ENCODE measurements at regions of chr2 and their contacts with region 1.

Region 1: DNA sequence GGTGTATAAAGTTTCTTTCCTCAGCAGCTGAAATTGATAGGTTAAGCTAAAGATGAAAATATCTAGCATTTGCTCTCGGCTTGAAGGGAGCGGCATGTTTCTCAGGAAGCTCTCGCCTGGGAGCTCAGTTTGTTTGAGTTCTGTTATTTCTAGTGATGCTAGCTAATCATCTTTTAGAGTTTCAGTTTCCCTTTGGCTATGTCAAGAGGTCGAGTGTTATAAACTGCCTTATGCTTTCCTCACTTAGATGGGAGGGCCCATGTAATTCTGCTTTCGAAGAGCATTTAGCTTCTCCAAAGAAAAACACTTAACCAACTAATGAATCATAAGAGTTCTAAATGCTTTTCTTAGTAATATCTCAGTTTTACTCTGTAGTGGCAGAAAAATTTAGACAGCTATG is 33.6 kb downstream of the PLCL1 start:
- DNase-seq: peak in 5 of 14 experiments; percentile 8 to 74 (median 66)
- ATAC-seq: peak; percentile 87
- H3K4me3 ChIP-seq: peak overlapping the region; percentile 4
- H3K4me3 Mint-ChIP-seq: peak overlapping the region; percentile 87
- H3K27ac ChIP-seq: peak overlapping the region; percentile 6 to 47
- H3K27ac Mint-ChIP-seq: peak overlapping the region; percentile 95
- H3K4me1 ChIP-seq: peaks cover 20% of the 10 kb centered on the region
- H3K4me1 Mint-ChIP-seq: peaks cover 73% of the 10 kb centered on the region
- H3K27me3 ChIP-seq: no peaks in the 10 kb centered on the region
- H3K27me3 Mint-ChIP-seq: no peaks in the 10 kb centered on the region
- CTCF ChIP-seq: no peak

Region 2: GRCh38 chr2:197813093-197813787 is 24.8 kb before region 1 on chr2:
- CTCF ChIA-PET with region 1: interaction called, 14 read pairs
- POLR2A ChIA-PET with region 1: interaction called, 12 read pairs
- intact Hi-C with region 1: loop called in 1 of 2 experiments (anchors 5 kb)
- DNase-seq: peak in 2 of 14 experiments; percentile 54 to 58
- ATAC-seq: peak; percentile 24
- H3K4me3 ChIP-seq: no peak overlapping the region
- H3K4me3 Mint-ChIP-seq: no peak overlapping the region
- H3K27ac ChIP-seq: no peak overlapping the region
- H3K27ac Mint-ChIP-seq: no peak overlapping the region
- H3K4me1 ChIP-seq: peaks cover 7% of the 10 kb centered on the region
- H3K4me1 Mint-ChIP-seq: peaks cover 78% of the 10 kb centered on the region
- H3K27me3 ChIP-seq: no peaks in the 10 kb centered on the region
- H3K27me3 Mint-ChIP-seq: no peaks in the 10 kb centered on the region
- CTCF ChIP-seq: peak; percentile 73

Region 3: DNA sequence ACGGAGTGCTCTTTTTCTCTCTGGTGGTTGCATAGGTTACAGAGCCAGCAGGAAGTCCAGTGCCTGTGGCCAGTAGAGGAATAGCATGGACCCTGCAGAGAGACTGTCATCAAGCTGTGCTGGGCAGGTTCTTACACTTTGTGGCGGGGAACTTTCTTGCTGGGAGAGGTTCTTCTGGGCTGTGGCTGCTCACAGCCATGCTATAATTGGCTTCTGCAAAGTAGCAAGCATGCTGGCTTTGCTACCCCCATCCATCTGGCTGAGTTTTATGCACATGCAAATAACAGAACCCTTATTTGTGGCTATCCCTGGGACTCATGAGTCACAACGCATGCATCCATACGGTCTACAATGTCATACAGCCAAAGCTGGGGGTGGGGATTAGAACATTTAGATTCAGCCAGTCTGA is 35.3 kb after region 1 on chr2:
- CTCF ChIA-PET with region 1: interaction called, 3 read pairs
- POLR2A ChIA-PET with region 1: interaction called, 30 read pairs
- intact Hi-C with region 1: loop called (anchors 2 to 5 kb)
- DNase-seq: no peak
- ATAC-seq: no peak
- H3K4me3 ChIP-seq: no peak overlapping the region
- H3K4me3 Mint-ChIP-seq: no peak overlapping the region
- H3K27ac ChIP-seq: no peak overlapping the region
- H3K27ac Mint-ChIP-seq: no peak overlapping the region
- H3K4me1 ChIP-seq: peaks cover 33% of the 10 kb centered on the region
- H3K4me1 Mint-ChIP-seq: peaks cover 82% of the 10 kb centered on the region
- H3K27me3 ChIP-seq: no peaks in the 10 kb centered on the region
- H3K27me3 Mint-ChIP-seq: no peaks in the 10 kb centered on the region
- CTCF ChIP-seq: no peak

Region 4: DNA sequence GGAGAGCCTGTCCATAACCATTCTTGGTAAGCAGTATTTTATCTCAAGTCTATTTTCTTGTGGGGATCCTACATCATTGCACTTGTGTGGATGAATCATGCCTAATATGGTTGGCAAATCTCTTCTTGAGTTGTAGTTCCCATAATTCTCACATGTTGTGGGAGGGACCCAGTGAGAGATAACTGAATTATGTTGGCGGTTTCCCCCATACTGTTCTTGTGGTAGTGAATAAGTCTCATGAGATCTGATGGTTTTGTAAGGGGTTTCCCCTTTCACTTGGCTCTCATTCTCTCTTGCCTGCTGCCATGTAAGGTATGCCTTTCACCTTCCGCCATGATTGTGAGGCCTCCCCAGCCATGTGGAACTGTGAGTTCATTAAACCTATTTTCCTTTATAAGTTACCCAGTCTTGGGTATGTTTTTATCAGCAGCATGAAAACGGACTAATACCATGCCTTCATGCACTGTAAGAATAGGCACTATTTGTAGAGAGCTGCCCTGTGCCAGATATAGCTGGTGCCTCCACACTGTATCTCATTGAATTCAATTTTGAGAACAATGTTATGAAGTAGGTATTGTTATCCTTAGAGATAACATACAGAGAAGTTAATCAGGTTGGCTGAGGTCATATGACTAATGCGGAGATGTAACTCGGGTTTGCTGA is 114.6 kb after region 1 on chr2:
- CTCF ChIA-PET with region 1: no interaction called
- POLR2A ChIA-PET with region 1: no interaction called
- intact Hi-C with region 1: loop called in 1 of 2 experiments (anchors 10 kb)
- DNase-seq: peak in 1 of 14 experiments; percentile 16
- ATAC-seq: no peak
- H3K4me3 ChIP-seq: no peak overlapping the region
- H3K4me3 Mint-ChIP-seq: peak overlapping the region; percentile 7
- H3K27ac ChIP-seq: no peak overlapping the region
- H3K27ac Mint-ChIP-seq: peak overlapping the region; percentile 80
- H3K4me1 ChIP-seq: no peaks in the 10 kb centered on the region
- H3K4me1 Mint-ChIP-seq: peaks cover 94% of the 10 kb centered on the region
- H3K27me3 ChIP-seq: no peaks in the 10 kb centered on the region
- H3K27me3 Mint-ChIP-seq: no peaks in the 10 kb centered on the region
- CTCF ChIP-seq: no peak

Region 5: DNA sequence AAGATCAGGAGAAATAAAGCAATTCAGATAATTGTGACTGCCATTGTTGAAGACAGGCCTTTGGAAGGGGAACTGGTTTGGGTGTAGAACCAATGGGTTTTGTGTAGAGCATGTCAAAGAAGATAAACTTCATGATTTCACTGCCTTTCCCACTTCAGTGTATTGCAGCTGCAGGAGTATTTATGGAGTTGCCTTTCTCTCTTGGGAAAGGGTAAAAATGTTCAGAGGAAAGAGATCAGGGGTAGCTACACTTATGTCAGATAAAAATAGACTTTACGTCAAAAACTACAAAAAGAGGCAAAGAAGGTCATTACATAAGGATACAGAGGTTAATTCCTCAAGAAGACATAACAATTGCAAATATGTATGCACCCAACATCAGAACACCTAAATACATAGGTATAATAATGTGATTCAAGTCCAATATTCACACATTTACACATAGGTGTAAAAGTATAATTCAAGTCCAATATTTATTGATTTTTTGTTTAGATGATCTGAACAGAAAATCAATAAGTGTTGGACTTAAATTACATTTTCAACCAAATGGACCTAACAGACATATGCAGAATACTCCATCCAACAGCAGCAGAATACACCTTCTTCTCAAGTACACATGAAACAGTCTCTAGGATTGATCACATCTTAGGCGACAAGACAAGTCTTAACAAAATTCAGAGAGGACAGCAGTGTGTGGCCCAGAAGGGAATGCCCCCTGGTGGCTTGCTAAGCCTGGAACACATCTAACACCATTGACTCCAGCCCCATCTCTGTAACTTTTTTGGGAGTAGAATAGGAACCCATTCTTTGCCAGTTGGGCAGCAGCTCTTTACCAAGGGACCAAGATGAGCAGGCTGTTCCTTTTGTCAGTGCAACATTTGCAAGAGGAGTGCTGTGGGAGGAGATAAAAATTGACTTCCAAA is 216.0 kb after region 1 on chr2:
- CTCF ChIA-PET with region 1: no interaction called
- POLR2A ChIA-PET with region 1: interaction called, 4 read pairs
- intact Hi-C with region 1: loop called in 1 of 2 experiments (anchors 1 kb)
- DNase-seq: peak; percentile 15 to 70 (median 37)
- ATAC-seq: peak; percentile 81
- H3K4me3 ChIP-seq: no peak overlapping the region
- H3K4me3 Mint-ChIP-seq: no peak overlapping the region
- H3K27ac ChIP-seq: no peak overlapping the region
- H3K27ac Mint-ChIP-seq: no peak overlapping the region
- H3K4me1 ChIP-seq: no peaks in the 10 kb centered on the region
- H3K4me1 Mint-ChIP-seq: peaks cover 49% of the 10 kb centered on the region
- H3K27me3 ChIP-seq: no peaks in the 10 kb centered on the region
- H3K27me3 Mint-ChIP-seq: no peaks in the 10 kb centered on the region
- CTCF ChIP-seq: peak; percentile 42

Region 6: GRCh38 chr2:198168656-198169055 is 330.6 kb after region 1 on chr2:
- CTCF ChIA-PET with region 1: no interaction called
- POLR2A ChIA-PET with region 1: no interaction called
- intact Hi-C with region 1: no loop called
- DNase-seq: no peak
- ATAC-seq: no peak
- H3K4me3 ChIP-seq: no peak overlapping the region
- H3K4me3 Mint-ChIP-seq: no peak overlapping the region
- H3K27ac ChIP-seq: no peak overlapping the region
- H3K27ac Mint-ChIP-seq: no peak overlapping the region
- H3K4me1 ChIP-seq: no peaks in the 10 kb centered on the region
- H3K4me1 Mint-ChIP-seq: no peaks in the 10 kb centered on the region
- H3K27me3 ChIP-seq: no peaks in the 10 kb centered on the region
- H3K27me3 Mint-ChIP-seq: no peaks in the 10 kb centered on the region
- CTCF ChIP-seq: no peak

Measured in CD4-positive, alpha-beta T cell (primary cell).